ENCODE measurements at regions of chr3 and their contacts with region 1.

Region 1: GRCh38 chr3:141816958-141817357 is 53.8 kb downstream of the GRK7 start:
- DNase-seq: no peak
- ATAC-seq: no peak
- H3K4me3 ChIP-seq: no peak overlapping the region
- H3K27ac ChIP-seq: no peak overlapping the region
- H3K4me1 ChIP-seq: no peaks in the 10 kb centered on the region
- H3K27me3 ChIP-seq: peaks cover 0 to 2% (median 0%) of the 10 kb centered on the region in 3 donors
- CTCF ChIP-seq: no peak

Region 2: GRCh38 chr3:141498598-141499223 is 318.2 kb before region 1 on chr3:
- intact Hi-C with region 1: no loop called
- DNase-seq: no peak
- ATAC-seq: peak in 3 of 4 donors; percentile 37 to 63 (median 42)
- H3K4me3 ChIP-seq: no peak overlapping the region
- H3K27ac ChIP-seq: no peak overlapping the region
- H3K4me1 ChIP-seq: peaks cover 20% of the 10 kb centered on the region
- H3K27me3 ChIP-seq: no peaks in the 10 kb centered on the region
- CTCF ChIP-seq: no peak

Region 3: GRCh38 chr3:141881702-141882101 is 64.7 kb after region 1 on chr3:
- intact Hi-C with region 1: loop called in 1 of 2 experiments (anchors 2 kb)
- DNase-seq: no peak
- ATAC-seq: no peak
- H3K4me3 ChIP-seq: no peak overlapping the region
- H3K27ac ChIP-seq: no peak overlapping the region
- H3K4me1 ChIP-seq: peaks cover 24% of the 10 kb centered on the region
- H3K27me3 ChIP-seq: no peaks in the 10 kb centered on the region
- CTCF ChIP-seq: no peak

Measured in psoas muscle (tissue), 8 donors.